ENCODE measurements at regions of chrX and their contacts with region 1.

Region 1: GRCh38 chrX:120664081-120664480 is 34.2 kb upstream of the C1GALT1C1 start:
- DNase-seq: peak; percentile 18
- ATAC-seq: peak; percentile 42; the same call in 1 of the 2 replicates
- H3K4me3 ChIP-seq: no peak overlapping the region
- H3K27ac ChIP-seq: no peak overlapping the region
- H3K4me1 ChIP-seq: no peaks in the 10 kb centered on the region; a peak in 1 of 4 replicates
- H3K27me3 ChIP-seq: no peaks in the 10 kb centered on the region
- CTCF ChIP-seq: peak in 2 of 3 experiments; percentile 45 to 57; a peak in 4 of 6 replicates
- POLR2A ChIP-seq: no peak
- RAD21 ChIP-seq: peak; percentile 67

Region 2: GRCh38 chrX:118884552-118885138 is 1779.4 kb before region 1 on chrX:
- CTCF ChIA-PET with region 1: no interaction called
- POLR2A ChIA-PET with region 1: no interaction called
- RAD21 ChIA-PET with region 1: no interaction called
- intact Hi-C with region 1: no loop called
- DNase-seq: no peak
- ATAC-seq: no peak
- H3K4me3 ChIP-seq: no peak overlapping the region
- H3K27ac ChIP-seq: no peak overlapping the region
- H3K4me1 ChIP-seq: no peaks in the 10 kb centered on the region
- H3K27me3 ChIP-seq: no peaks in the 10 kb centered on the region
- CTCF ChIP-seq: no peak
- POLR2A ChIP-seq: no peak
- RAD21 ChIP-seq: no peak

Region 3: GRCh38 chrX:120485638-120486520 is 178.2 kb before region 1 on chrX:
- CTCF ChIA-PET with region 1: interaction called, 10 read pairs
- POLR2A ChIA-PET with region 1: no interaction called
- RAD21 ChIA-PET with region 1: no interaction called
- intact Hi-C with region 1: no loop called
- DNase-seq: peak; percentile 80
- ATAC-seq: peak; percentile 91
- H3K4me3 ChIP-seq: peak overlapping the region; percentile 22 to 40
- H3K27ac ChIP-seq: peak overlapping the region; percentile 80
- H3K4me1 ChIP-seq: peaks cover 3 to 20% of the 10 kb centered on the region in 2 experiments; a peak in 3 of 4 replicates
- H3K27me3 ChIP-seq: no peaks in the 10 kb centered on the region
- CTCF ChIP-seq: peak; percentile 41 to 62 (median 53); a peak in 5 of 6 replicates
- POLR2A ChIP-seq: no peak
- RAD21 ChIP-seq: peak; percentile 41

Region 4: DNA sequence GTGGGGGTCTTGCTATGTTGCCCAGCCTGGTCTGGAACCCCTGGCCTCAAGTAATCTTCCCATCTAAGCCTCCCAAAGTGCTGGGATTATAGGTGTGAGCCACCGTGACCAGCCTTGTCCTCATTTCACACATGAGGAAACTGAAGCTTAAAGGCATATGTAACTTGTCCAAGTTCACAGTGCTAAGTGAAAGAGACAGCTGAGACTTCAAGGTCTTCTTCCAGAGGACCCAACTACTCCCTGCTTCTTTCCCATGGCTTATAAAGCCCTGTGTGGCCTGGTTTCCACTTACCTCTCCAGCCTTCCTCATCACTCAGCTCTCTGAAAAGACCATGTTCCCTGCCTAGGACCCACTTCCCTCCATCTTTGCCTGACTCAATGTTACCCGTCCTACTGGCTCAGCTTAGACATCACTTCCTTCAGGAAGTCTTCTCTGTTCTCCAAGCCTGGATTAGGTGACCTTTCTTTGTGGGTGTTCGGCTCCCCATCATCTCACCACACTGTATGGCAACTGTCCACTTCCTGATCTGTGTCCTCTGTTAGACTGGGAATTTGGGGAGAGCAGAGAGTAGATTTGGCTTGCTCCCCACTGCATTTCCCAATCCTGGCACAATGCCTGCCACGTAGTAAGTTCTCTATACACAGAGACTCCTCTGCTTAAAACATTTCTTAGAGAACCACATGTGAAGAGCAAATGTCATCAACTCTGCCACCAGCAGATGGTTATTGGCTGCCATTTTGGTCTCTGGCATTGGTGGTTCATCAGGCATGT is 164.6 kb before region 1 on chrX:
- CTCF ChIA-PET with region 1: no interaction called
- POLR2A ChIA-PET with region 1: no interaction called
- RAD21 ChIA-PET with region 1: no interaction called
- intact Hi-C with region 1: loop called (anchors 1 kb)
- DNase-seq: no peak
- ATAC-seq: no peak
- H3K4me3 ChIP-seq: no peak overlapping the region
- H3K27ac ChIP-seq: no peak overlapping the region
- H3K4me1 ChIP-seq: no peaks in the 10 kb centered on the region
- H3K27me3 ChIP-seq: no peaks in the 10 kb centered on the region
- CTCF ChIP-seq: no peak
- POLR2A ChIP-seq: no peak
- RAD21 ChIP-seq: no peak

Region 5: DNA sequence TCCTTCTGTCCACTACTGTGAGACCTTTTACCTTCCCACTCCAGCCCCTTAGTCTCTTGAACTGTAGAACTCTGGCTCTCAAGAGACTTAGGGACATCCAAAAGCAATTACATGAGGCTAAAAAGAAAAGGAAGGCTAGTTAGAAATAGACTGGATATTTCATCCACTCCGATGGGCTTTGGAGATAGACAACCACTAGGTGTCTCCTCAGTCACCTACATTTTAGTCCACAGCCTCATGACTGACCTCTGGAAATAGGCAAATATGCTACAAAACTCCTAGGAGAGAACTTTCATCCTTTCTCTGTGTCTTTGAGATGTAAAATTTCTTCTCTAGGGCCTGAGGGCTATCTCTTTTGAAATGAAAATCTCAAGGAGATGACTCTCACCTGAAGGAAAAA is 149.8 kb before region 1 on chrX:
- CTCF ChIA-PET with region 1: interaction called, 6 read pairs
- POLR2A ChIA-PET with region 1: no interaction called
- RAD21 ChIA-PET with region 1: no interaction called
- intact Hi-C with region 1: loop called (anchors 1 kb)
- DNase-seq: no peak
- ATAC-seq: peak; percentile 67
- H3K4me3 ChIP-seq: no peak overlapping the region
- H3K27ac ChIP-seq: no peak overlapping the region
- H3K4me1 ChIP-seq: peaks cover 2 to 7% of the 10 kb centered on the region in 2 experiments; a peak in 2 of 4 replicates
- H3K27me3 ChIP-seq: no peaks in the 10 kb centered on the region
- CTCF ChIP-seq: peak; percentile 38 to 51 (median 38); a peak in 5 of 6 replicates
- POLR2A ChIP-seq: no peak
- RAD21 ChIP-seq: peak; percentile 65